ENCODE measurements at regions of chr3 and their contacts with region 1.

Region 1: DNA sequence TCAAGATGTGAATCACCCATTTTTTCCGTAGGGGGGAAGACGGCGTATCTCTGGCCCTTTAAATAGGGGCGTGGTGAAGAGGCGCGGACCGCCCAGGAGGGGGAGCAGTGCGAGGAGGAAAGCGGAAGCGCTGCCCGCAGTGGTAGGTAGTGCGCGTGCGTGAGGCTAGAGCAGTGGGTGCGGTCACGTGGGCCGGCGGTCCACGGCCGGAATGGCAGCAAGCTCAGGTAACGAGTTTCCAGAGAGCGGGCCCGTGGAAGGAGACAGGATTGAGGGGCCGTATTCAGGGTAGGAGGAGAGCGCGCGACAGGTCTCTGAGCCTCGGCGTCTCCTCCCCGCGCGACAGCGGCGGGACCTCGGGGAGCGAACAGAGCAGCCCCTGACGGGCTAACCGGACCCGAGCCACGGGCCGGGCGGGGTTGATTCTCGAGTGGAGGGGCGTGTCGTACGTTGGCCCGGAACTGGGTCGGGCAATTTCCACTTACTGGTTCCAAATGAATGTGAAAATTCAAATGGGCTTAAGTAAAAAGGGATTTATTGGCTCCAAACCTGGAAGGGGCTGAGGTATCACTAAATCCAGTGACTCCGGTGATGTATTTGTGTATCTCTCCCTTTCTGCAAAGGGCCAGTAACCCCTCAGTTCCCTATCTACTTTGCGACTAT is at the start of gene VPS8:
- DNase-seq: peak; percentile 97
- ATAC-seq: peak; percentile 82
- H3K4me3 Mint-ChIP-seq: peak within 1 kb of the TSS; percentile 97
- H3K27ac Mint-ChIP-seq: peak within 1 kb of the TSS; percentile 94
- H3K4me1 Mint-ChIP-seq: peaks cover 48% of the 10 kb centered on the region
- H3K27me3 Mint-ChIP-seq: no peaks in the 10 kb centered on the region
- total RNA-seq, gene VPS8: 24.7 to 33.9 TPM

Region 2: DNA sequence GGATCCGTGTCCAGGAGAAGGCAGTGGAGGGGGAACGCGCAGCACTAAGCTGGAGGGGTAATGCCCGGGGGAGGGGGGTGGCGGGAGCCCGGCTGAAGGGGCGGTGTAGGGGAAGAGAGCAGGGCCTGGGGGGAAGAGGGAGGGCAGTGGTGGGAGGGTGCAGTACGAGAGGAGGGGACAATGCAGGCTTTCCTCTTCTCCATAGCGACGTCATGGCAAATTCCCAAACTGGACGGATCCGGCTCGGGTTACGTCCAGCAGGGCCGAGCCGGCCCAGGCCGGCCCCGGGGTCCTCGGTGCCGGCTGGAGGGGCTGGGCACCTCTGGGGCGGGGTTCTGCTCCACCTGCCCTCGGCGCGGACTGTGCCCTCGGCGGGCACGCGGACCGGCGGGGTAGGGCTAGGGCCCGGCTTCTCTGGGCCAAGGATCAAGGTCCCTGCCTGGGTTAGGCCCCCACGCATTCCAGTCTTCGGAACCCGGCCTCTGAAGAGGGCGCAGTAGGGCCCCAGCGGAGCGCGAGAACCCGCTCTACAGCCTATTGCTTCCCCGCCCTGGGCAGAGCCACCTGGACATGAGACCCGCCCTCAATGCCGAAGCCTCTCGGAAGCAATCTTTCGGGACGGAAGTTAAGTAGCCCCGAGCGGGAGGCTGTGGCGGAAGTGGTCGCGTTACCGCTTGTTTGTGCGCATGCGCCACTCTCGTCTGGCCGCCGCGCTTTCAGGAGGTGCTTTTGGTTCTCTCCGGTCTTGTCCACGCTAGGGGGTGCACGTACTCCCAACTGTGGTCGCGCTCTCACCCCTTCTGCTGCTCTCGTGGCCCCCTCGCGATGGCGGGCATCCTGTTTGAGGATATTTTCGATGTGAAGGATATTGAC is 449.2 kb before region 1 on chr3:
- CTCF ChIA-PET with region 1: no interaction called
- POLR2A ChIA-PET with region 1: no interaction called
- intact Hi-C with region 1: loop called (anchors 1 kb)
- DNase-seq: peak; percentile 97
- ATAC-seq: peak; percentile 91
- H3K4me3 Mint-ChIP-seq: peak overlapping the region; percentile 98
- H3K27ac Mint-ChIP-seq: peak overlapping the region; percentile 98
- H3K4me1 Mint-ChIP-seq: peaks cover 30% of the 10 kb centered on the region
- H3K27me3 Mint-ChIP-seq: no peaks in the 10 kb centered on the region

Region 3: DNA sequence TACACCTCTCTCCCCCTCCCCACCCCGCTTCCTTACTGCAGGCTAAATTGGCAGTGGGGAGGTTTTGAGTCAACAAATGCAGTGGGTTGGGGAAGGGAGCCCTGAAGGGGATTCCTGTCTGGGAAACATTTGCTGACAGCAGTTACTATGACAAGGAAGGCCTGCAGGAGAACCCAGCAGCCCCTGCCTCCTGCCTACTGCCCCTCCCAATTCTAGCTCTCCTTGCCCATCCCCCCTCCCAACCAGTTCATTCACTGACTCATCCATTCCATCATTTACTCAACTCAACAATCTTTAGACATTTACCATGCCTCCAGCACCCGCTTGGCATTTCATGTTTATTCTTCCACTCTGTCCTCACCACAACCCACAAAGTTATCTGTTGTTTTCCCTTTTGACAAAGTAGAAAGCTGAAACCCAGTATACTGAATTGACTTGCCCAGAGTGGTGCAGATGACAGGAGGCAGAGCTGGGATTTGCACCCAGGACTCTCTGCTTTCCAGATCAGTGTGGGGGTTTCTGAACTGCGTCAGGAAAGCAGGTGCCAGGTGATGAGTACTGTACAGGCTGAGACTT is 175.3 kb before region 1 on chr3:
- CTCF ChIA-PET with region 1: no interaction called
- POLR2A ChIA-PET with region 1: interaction called, 4 read pairs
- intact Hi-C with region 1: loop called in 1 of 2 experiments (anchors 2 kb)
- DNase-seq: peak; percentile 80
- ATAC-seq: peak; percentile 90
- H3K4me3 Mint-ChIP-seq: no peak overlapping the region
- H3K27ac Mint-ChIP-seq: no peak overlapping the region
- H3K4me1 Mint-ChIP-seq: peaks cover 4% of the 10 kb centered on the region
- H3K27me3 Mint-ChIP-seq: peaks cover 3% of the 10 kb centered on the region

Region 4: GRCh38 chr3:184822654-184823053 is 10.5 kb after region 1 on chr3:
- CTCF ChIA-PET with region 1: interaction called, 13 read pairs
- POLR2A ChIA-PET with region 1: no interaction called
- intact Hi-C with region 1: no loop called
- DNase-seq: no peak
- ATAC-seq: no peak
- H3K4me3 Mint-ChIP-seq: no peak overlapping the region
- H3K27ac Mint-ChIP-seq: no peak overlapping the region
- H3K4me1 Mint-ChIP-seq: peaks cover 7% of the 10 kb centered on the region
- H3K27me3 Mint-ChIP-seq: no peaks in the 10 kb centered on the region

Region 5: GRCh38 chr3:185498503-185499396 is 686.6 kb after region 1 on chr3 and contains the start of gene TMEM41A:
- CTCF ChIA-PET with region 1: no interaction called
- POLR2A ChIA-PET with region 1: no interaction called
- intact Hi-C with region 1: loop called in 1 of 2 experiments (anchors 2 kb)
- DNase-seq: peak; percentile 96
- ATAC-seq: peak; percentile 99
- H3K4me3 Mint-ChIP-seq: peak within 1 kb of the TSS; percentile 98
- H3K27ac Mint-ChIP-seq: peak within 1 kb of the TSS; percentile 91
- H3K4me1 Mint-ChIP-seq: peaks cover 18% of the 10 kb centered on the region
- H3K27me3 Mint-ChIP-seq: no peaks in the 10 kb centered on the region
- total RNA-seq, gene TMEM41A: 19.6 to 21.6 TPM

Measured in activated CD4-positive, alpha-beta T cell treated with anti-CD3 and anti-CD28 coated beads for 36 hours (primary cell).